ENCODE measurements at regions of chr18 and their contacts with region 1.

Region 1: GRCh38 chr18:58887613-58887963 is 22.9 kb downstream of the ZNF532 start:
- DNase-seq: peak; percentile 84
- ATAC-seq: peak; percentile 98
- H3K4me3 ChIP-seq: peak overlapping the region; percentile 18; the same call in 1 of the 2 replicates
- H3K27ac ChIP-seq: peak overlapping the region; percentile 72
- H3K4me1 ChIP-seq: peaks cover 31% of the 10 kb centered on the region
- H3K27me3 ChIP-seq: no peaks in the 10 kb centered on the region
- CTCF ChIP-seq: no peak

Region 2: DNA sequence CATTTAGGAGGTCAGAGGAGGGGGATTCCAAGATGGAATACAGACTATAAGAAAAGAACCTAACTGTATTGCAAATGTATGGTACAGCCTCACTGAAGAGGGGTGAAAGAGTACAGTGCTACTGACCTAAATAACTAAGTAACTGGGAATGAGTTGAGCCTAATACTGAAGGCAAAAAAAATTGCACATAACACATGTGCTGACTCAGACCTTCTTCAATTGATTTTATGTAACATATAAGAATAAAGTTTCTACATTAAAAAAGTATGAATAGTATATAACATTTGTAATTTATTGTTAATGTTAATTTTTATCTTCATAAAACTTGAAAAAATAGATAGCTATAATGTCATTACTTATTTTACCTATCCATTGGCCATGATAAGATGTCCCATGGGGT is 174.7 kb before region 1 on chr18:
- CTCF ChIA-PET with region 1: no interaction called
- POLR2A ChIA-PET with region 1: no interaction called
- intact Hi-C with region 1: no loop called
- DNase-seq: no peak
- ATAC-seq: no peak
- H3K4me3 ChIP-seq: no peak overlapping the region
- H3K27ac ChIP-seq: no peak overlapping the region
- H3K4me1 ChIP-seq: no peaks in the 10 kb centered on the region
- H3K27me3 ChIP-seq: no peaks in the 10 kb centered on the region
- CTCF ChIP-seq: no peak

Region 3: DNA sequence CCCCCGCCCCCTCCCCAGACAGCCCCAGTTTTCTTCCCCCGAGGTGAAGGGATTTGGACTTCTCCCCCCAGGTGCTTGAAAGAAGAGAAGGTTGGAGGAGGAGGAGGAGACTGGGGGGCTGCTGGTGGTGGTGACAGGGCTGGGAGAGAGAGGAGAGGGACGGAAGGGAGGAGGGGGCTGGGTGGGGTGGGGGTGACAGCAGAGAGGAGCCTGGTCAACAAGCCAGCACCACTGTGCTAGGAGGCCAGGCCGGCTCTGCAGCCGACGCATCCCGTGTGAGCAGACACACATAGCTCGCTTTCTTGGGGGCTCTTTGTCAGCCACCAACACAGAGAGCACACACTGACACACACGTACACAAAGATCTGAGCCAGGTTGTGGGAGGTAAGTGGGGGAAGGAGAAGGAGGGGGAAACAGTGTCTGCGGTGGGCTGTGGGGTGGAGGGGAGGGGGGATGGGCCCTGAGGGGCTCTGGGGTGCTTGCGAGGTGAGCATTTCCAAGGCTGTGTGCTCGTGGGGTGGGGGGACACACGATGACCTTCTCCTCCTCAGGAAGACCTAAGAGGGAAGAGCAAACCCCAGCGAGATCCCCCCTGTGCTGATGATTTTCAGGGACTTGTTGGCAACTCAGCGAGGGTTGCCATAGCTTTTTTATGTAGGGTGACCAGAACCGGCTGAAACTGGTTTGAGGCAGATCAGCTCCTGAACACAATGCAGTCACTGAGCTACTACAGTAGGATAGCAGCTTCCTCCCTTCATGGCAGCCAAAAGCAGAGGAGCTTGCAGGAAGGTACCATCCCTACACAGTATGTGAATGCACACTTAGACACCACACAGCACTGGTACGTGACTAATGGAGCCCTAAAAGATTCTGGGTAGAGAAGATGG is 23.2 kb before region 1 on chr18 and contains the start of gene ZNF532:
- CTCF ChIA-PET with region 1: no interaction called
- POLR2A ChIA-PET with region 1: interaction called, 11 read pairs
- intact Hi-C with region 1: no loop called
- DNase-seq: peak; percentile 68
- ATAC-seq: peak; percentile 53
- H3K4me3 ChIP-seq: peak within 1 kb of the TSS; percentile 62
- H3K27ac ChIP-seq: peak within 1 kb of the TSS; percentile 87
- H3K4me1 ChIP-seq: peaks cover 71% of the 10 kb centered on the region
- H3K27me3 ChIP-seq: no peaks in the 10 kb centered on the region
- CTCF ChIP-seq: no peak
- total RNA-seq, gene ZNF532: 47.3 and 62.6 TPM in 2 replicates

Region 4: GRCh38 chr18:58947136-58947732 is 59.6 kb after region 1 on chr18:
- CTCF ChIA-PET with region 1: no interaction called
- POLR2A ChIA-PET with region 1: no interaction called
- intact Hi-C with region 1: loop called (anchors 10 kb)
- DNase-seq: no peak
- ATAC-seq: no peak
- H3K4me3 ChIP-seq: no peak overlapping the region
- H3K27ac ChIP-seq: no peak overlapping the region
- H3K4me1 ChIP-seq: peaks cover 7% of the 10 kb centered on the region
- H3K27me3 ChIP-seq: no peaks in the 10 kb centered on the region
- CTCF ChIP-seq: no peak